HCT116 (cell line): ENCODE measurements at regions of chr3 and their contacts with region 1.

Region 1: DNA sequence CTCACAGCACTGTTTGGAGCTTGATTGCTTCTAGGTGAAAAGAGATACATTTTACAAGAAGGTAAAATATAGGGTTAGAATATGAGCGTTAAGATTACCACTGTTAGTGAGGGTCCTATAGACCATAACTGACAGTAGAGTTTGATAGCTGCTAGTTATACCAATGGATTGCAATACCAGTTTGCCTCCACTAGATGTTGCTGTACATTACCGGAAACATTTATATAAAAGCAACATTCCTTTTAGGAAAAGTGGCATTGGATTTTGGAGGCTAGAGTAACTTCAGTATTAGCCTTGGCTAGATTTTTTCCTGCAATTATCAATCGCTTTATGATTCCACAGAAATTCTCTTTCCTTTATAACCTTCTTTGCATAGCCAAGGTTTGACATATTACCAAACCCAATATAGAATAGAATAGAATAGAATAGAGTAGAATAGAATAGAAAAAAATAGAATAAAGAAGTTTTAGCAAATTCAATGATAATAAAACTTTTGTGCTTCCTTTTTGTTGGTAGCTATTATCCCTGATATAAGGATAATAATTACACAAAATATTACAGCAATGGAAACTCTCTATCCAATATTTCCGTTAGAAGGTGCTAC is 1093.6 kb upstream of the ALCAM start:
- DNase-seq: peak; percentile 19
- ATAC-seq: peak; percentile 63
- H3K4me3 ChIP-seq: no peak overlapping the region
- H3K27ac ChIP-seq: no peak overlapping the region
- H3K4me1 ChIP-seq: no peaks in the 10 kb centered on the region
- H3K27me3 ChIP-seq: no peaks in the 10 kb centered on the region
- CTCF ChIP-seq: peak; percentile 25 to 78 (median 68); a peak in 5 of 6 replicates
- POLR2A ChIP-seq: no peak
- RAD21 ChIP-seq: peak; percentile 75

Region 2: DNA sequence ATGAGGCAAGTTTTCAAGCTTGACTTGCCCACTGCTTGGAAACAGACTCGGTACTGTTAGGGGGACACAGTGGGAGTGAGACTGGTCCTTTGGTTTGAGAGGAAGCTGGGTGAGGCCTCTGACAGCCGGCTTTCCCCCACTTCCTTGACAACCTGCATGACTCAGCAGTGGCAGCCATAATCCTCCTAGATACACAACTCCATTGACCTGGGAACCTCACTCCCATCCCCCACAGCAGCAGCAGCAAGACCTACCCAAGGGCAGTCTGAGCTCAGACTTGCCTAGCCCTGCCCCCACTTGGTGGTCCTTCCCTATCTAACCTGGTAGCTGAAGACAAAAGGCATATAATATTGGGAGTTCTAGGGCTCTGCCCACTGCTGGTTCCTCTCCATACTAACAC is 50.1 kb after region 1 on chr3:
- CTCF ChIA-PET with region 1: no interaction called
- POLR2A ChIA-PET with region 1: no interaction called
- RAD21 ChIA-PET with region 1: no interaction called
- intact Hi-C with region 1: no loop called
- DNase-seq: no peak
- ATAC-seq: no peak
- H3K4me3 ChIP-seq: no peak overlapping the region
- H3K27ac ChIP-seq: peak overlapping the region; percentile 22; the same call in 1 of the 2 replicates
- H3K4me1 ChIP-seq: peaks cover 0 to 11% of the 10 kb centered on the region in 2 experiments; a peak in 2 of 4 replicates
- H3K27me3 ChIP-seq: no peaks in the 10 kb centered on the region
- CTCF ChIP-seq: no peak
- POLR2A ChIP-seq: no peak
- RAD21 ChIP-seq: no peak

Region 3: GRCh38 chr3:104521606-104522336 is 248.6 kb after region 1 on chr3:
- CTCF ChIA-PET with region 1: no interaction called
- POLR2A ChIA-PET with region 1: no interaction called
- RAD21 ChIA-PET with region 1: no interaction called
- intact Hi-C with region 1: no loop called
- DNase-seq: no peak
- ATAC-seq: no peak
- H3K4me3 ChIP-seq: no peak overlapping the region
- H3K27ac ChIP-seq: no peak overlapping the region
- H3K4me1 ChIP-seq: no peaks in the 10 kb centered on the region
- H3K27me3 ChIP-seq: no peaks in the 10 kb centered on the region
- CTCF ChIP-seq: no peak
- POLR2A ChIP-seq: no peak
- RAD21 ChIP-seq: no peak

Region 4: DNA sequence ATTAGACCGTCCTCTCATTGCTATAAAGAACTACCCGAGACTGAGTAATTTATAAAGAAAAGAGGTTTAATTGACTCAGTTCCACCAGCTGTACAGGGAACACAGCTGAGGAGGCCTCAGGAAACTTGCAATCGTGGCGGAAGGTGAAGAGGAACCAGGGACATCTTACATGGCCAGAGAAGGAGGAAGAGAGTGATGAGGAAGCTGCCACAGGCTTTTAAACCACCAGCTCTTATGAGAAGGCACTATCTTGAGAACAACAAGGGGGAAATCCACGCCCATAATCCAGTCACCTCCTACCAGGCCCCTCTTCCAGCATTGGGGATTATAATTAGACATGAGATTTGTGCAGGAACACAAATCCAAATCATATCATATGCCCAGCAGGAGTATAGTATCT is 1232.0 kb after region 1 on chr3:
- CTCF ChIA-PET with region 1: no interaction called
- POLR2A ChIA-PET with region 1: no interaction called
- RAD21 ChIA-PET with region 1: no interaction called
- intact Hi-C with region 1: no loop called
- DNase-seq: no peak
- ATAC-seq: no peak
- H3K4me3 ChIP-seq: no peak overlapping the region
- H3K27ac ChIP-seq: no peak overlapping the region
- H3K4me1 ChIP-seq: no peaks in the 10 kb centered on the region
- H3K27me3 ChIP-seq: no peaks in the 10 kb centered on the region
- CTCF ChIP-seq: no peak
- POLR2A ChIP-seq: no peak
- RAD21 ChIP-seq: no peak

Region 5: DNA sequence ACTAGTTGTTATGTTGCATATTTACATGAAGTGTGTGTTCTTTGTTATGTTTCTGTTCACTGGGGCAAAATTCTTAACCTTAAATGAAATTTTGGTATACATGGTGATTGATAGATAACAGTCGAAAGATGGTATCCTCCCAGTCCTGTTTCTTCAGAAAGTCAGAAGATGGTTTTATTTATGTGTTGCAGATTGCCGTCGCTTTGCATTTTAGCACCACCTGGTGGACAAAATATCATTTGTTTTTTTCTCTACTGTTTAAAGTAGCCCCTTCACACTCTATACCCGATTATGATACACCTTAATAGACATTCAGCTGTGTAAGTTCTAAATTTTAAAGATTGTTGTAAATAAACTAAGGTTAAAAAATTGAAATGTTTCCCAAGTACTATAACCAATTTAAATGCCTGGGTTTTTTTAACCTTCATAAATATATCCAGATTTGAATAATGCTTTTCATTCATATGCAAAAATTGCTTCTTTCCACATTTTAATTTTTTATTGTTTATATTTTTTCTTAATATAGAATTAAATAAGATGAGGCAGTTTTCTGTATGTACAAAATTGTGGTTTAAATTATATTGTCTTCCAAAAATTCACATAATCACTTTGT is 1245.8 kb after region 1 on chr3:
- CTCF ChIA-PET with region 1: no interaction called
- POLR2A ChIA-PET with region 1: no interaction called
- RAD21 ChIA-PET with region 1: no interaction called
- intact Hi-C with region 1: loop called (anchors 5 kb)
- DNase-seq: peak; percentile 54
- ATAC-seq: peak; percentile 83
- H3K4me3 ChIP-seq: no peak overlapping the region
- H3K27ac ChIP-seq: no peak overlapping the region
- H3K4me1 ChIP-seq: peaks cover 0 to 3% of the 10 kb centered on the region in 2 experiments; a peak in 1 of 4 replicates
- H3K27me3 ChIP-seq: no peaks in the 10 kb centered on the region
- CTCF ChIP-seq: peak; percentile 39 to 73 (median 57); a peak in 4 of 6 replicates
- POLR2A ChIP-seq: no peak
- RAD21 ChIP-seq: peak; percentile 84